Panc1 (cell line): ENCODE measurements at regions of chr9 and their contacts with region 1.

Region 1: GRCh38 chr9:15529566-15530324 is 19.0 kb upstream of the PSIP1 start:
- DNase-seq: no peak
- ATAC-seq: no peak
- H3K4me3 ChIP-seq: no peak overlapping the region
- H3K27ac ChIP-seq: no peak overlapping the region
- H3K4me1 ChIP-seq: no peaks in the 10 kb centered on the region
- H3K27me3 ChIP-seq: no peaks in the 10 kb centered on the region
- CTCF ChIP-seq: no peak

Region 2: DNA sequence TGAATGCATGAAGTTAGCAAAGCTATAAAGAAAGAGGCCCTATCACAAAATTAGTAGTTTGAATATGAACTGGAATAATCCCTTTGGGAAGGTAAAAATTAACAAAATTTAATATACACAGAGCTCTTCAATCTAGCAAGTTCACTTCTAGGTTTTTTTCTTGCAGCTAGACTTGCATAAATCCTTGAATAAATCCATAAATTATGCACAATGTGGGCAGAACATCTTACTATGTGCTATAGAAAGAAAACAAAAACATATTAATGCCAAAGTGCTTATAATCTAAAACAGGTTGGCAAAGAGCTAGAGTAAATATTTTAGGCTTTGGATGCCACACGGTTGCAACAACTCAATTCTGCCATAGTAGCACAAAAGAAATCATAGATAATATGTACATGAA is 481.0 kb before region 1 on chr9:
- CTCF ChIA-PET with region 1: no interaction called
- POLR2A ChIA-PET with region 1: no interaction called
- in situ Hi-C with region 1: no loop called
- intact Hi-C with region 1: no loop called
- DNase-seq: no peak
- ATAC-seq: no peak
- H3K4me3 ChIP-seq: no peak overlapping the region
- H3K27ac ChIP-seq: no peak overlapping the region
- H3K4me1 ChIP-seq: no peaks in the 10 kb centered on the region
- H3K27me3 ChIP-seq: no peaks in the 10 kb centered on the region
- CTCF ChIP-seq: no peak

Region 3: DNA sequence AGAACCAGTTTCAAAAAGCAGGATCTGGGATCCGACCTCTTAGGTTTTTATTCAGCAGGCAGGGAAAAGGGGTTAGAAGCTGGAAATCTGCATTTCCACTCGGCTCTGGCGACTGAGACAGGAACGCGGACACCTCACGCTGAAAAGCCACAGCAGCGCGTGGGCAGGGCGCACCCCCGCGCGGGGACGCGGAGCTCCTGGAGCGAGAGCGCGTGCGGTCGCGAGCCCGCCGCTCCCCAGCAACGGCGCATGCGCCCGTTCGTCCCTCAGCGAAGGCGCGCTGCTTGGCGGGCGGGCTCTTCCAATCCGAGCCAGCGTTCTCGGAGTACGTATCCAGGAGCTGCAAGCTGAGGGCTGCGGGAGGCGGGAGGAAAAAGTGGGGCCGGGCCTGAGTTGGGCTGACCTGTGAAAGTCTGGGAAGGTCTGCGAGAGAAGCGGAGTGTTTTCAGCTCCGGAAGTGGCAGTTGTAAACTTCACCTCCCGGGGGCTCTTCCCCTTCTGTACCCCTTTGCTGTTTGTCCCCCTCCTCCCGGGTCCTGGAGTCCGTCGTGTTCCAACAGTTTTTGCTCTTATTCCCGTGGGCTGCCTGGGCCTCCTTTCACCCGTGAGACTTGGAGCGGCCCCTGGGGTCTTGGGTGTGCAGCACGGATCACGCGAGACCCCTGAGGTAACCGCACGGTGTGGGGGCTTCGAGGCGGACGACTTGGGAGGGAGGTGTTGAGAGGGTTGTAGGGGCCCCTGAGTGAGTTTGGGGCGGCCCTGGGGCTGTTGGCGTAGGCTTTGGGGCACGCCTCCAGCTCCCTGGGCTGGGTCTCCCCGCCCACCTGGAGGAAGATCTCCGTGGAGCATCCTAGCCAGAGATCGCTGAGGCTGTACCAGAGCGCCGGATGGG is 23.1 kb after region 1 on chr9 and contains the start of gene CCDC171:
- CTCF ChIA-PET with region 1: interaction called, 12 read pairs
- POLR2A ChIA-PET with region 1: interaction called, 3 read pairs
- in situ Hi-C with region 1: no loop called
- intact Hi-C with region 1: no loop called
- DNase-seq: no peak
- ATAC-seq: peak; percentile 99
- H3K4me3 ChIP-seq: peak within 1 kb of the TSS; percentile 62 to 76
- H3K27ac ChIP-seq: peak within 1 kb of the TSS; percentile 66
- H3K4me1 ChIP-seq: no peaks in the 10 kb centered on the region
- H3K27me3 ChIP-seq: no peaks in the 10 kb centered on the region
- CTCF ChIP-seq: no peak
- total RNA-seq, gene CCDC171: 1.5 TPM